HCT116 (cell line): ENCODE measurements at regions of chr6 and their contacts with region 1.

Region 1: GRCh38 chr6:132962936-132963868 is 148.8 kb downstream of the RPS12 start:
- DNase-seq: peak; percentile 62
- ATAC-seq: peak; percentile 100
- H3K4me3 ChIP-seq: no peak overlapping the region
- H3K27ac ChIP-seq: no peak overlapping the region
- H3K4me1 ChIP-seq: no peaks in the 10 kb centered on the region
- H3K27me3 ChIP-seq: no peaks in the 10 kb centered on the region
- CTCF ChIP-seq: peak; percentile 75 to 87 (median 86)
- POLR2A ChIP-seq: no peak
- RAD21 ChIP-seq: peak; percentile 89

Region 2: DNA sequence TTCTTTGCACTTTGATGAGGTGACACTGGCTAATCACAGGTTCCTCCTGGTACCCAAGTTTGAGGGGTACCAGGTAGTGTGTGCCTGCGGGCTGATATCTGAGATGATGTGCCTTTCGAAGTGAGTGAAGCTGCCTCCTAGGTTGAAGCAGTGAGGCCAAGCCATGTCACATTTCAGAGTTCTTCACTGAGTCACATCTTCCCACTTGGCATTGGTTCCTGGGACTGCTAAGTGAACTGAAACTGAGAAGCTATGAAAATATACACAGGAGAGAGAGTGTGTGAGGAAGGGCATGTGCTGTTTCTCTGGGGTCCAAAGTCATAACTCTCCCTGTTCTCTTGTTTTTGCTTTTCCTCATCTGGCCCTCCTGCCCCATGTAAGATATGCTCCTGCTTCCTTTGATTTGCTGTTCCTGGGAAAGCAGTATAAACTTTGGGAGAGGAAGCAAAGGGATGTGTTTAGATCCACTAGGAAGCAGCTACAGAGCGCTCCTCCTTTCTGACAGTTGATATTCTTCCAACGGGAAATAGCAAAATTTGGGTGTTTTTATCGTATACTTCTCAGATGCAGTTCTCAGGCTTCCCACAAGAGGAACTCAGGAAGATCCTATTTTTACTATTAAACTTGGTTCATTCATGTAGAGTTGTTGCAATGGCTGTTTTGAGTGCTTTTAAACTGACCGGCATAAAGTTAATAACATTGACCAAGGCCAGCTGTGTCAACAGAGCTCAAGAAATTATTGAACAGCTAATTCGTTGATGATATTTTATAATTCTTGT is 715.6 kb before region 1 on chr6:
- CTCF ChIA-PET with region 1: no interaction called
- POLR2A ChIA-PET with region 1: no interaction called
- RAD21 ChIA-PET with region 1: no interaction called
- intact Hi-C with region 1: no loop called
- DNase-seq: no peak
- ATAC-seq: no peak
- H3K4me3 ChIP-seq: no peak overlapping the region
- H3K27ac ChIP-seq: no peak overlapping the region
- H3K4me1 ChIP-seq: no peaks in the 10 kb centered on the region
- H3K27me3 ChIP-seq: no peaks in the 10 kb centered on the region
- CTCF ChIP-seq: no peak
- POLR2A ChIP-seq: no peak
- RAD21 ChIP-seq: no peak

Region 3: GRCh38 chr6:132788658-132789395 is 174.4 kb before region 1 on chr6:
- CTCF ChIA-PET with region 1: no interaction called
- POLR2A ChIA-PET with region 1: no interaction called
- RAD21 ChIA-PET with region 1: no interaction called
- intact Hi-C with region 1: no loop called
- DNase-seq: no peak
- ATAC-seq: no peak
- H3K4me3 ChIP-seq: no peak overlapping the region
- H3K27ac ChIP-seq: no peak overlapping the region
- H3K4me1 ChIP-seq: no peaks in the 10 kb centered on the region
- H3K27me3 ChIP-seq: no peaks in the 10 kb centered on the region
- CTCF ChIP-seq: no peak
- POLR2A ChIP-seq: no peak
- RAD21 ChIP-seq: no peak

Region 4: GRCh38 chr6:132820629-132821381 is 142.4 kb before region 1 on chr6:
- CTCF ChIA-PET with region 1: interaction called, 6 read pairs
- POLR2A ChIA-PET with region 1: no interaction called
- RAD21 ChIA-PET with region 1: interaction called in 1 of 2 experiments, 10 read pairs
- intact Hi-C with region 1: no loop called
- DNase-seq: no peak
- ATAC-seq: peak; percentile 44
- H3K4me3 ChIP-seq: no peak overlapping the region
- H3K27ac ChIP-seq: peak overlapping the region; percentile 44; the same call in 1 of the 2 replicates
- H3K4me1 ChIP-seq: peaks cover 0 to 54% of the 10 kb centered on the region in 2 experiments; a peak in 3 of 4 replicates
- H3K27me3 ChIP-seq: no peaks in the 10 kb centered on the region
- CTCF ChIP-seq: no peak
- POLR2A ChIP-seq: peak; percentile 17
- RAD21 ChIP-seq: no peak

Region 5: GRCh38 chr6:132937466-132937906 is 25.7 kb before region 1 on chr6:
- CTCF ChIA-PET with region 1: interaction called, 16 read pairs
- POLR2A ChIA-PET with region 1: no interaction called
- RAD21 ChIA-PET with region 1: interaction called in 1 of 2 experiments, 4 read pairs
- intact Hi-C with region 1: no loop called
- DNase-seq: peak; percentile 57
- ATAC-seq: peak; percentile 91
- H3K4me3 ChIP-seq: 0 out of 4 replicates have a peak overlapping the region, but pooled peaks of 1 of the 2 experiments have one; percentile 2
- H3K27ac ChIP-seq: no peak overlapping the region
- H3K4me1 ChIP-seq: peaks cover 0 to 5% of the 10 kb centered on the region in 2 experiments; a peak in 2 of 4 replicates
- H3K27me3 ChIP-seq: peaks cover 6% of the 10 kb centered on the region; the same call in 1 of the 2 replicates
- CTCF ChIP-seq: peak; percentile 39 to 74 (median 68); a peak in 5 of 6 replicates
- POLR2A ChIP-seq: no peak
- RAD21 ChIP-seq: peak; percentile 64

Region 6: GRCh38 chr6:133184798-133185372 is 221.7 kb after region 1 on chr6:
- CTCF ChIA-PET with region 1: interaction called, 4 read pairs
- POLR2A ChIA-PET with region 1: no interaction called
- RAD21 ChIA-PET with region 1: no interaction called
- intact Hi-C with region 1: loop called (anchors 5 kb)
- DNase-seq: no peak
- ATAC-seq: peak; percentile 57; the same call in 1 of the 2 replicates
- H3K4me3 ChIP-seq: no peak overlapping the region
- H3K27ac ChIP-seq: no peak overlapping the region
- H3K4me1 ChIP-seq: no peaks in the 10 kb centered on the region
- H3K27me3 ChIP-seq: peaks cover 21% of the 10 kb centered on the region
- CTCF ChIP-seq: peak; percentile 38 to 69 (median 50); a peak in 5 of 6 replicates
- POLR2A ChIP-seq: no peak
- RAD21 ChIP-seq: peak; percentile 58

Region 7: GRCh38 chr6:133553652-133554051 is 590.5 kb after region 1 on chr6:
- CTCF ChIA-PET with region 1: interaction called, 7 read pairs
- POLR2A ChIA-PET with region 1: no interaction called
- RAD21 ChIA-PET with region 1: no interaction called
- intact Hi-C with region 1: loop called (anchors 2 kb)
- DNase-seq: peak; percentile 56
- ATAC-seq: peak; percentile 86
- H3K4me3 ChIP-seq: no peak overlapping the region
- H3K27ac ChIP-seq: no peak overlapping the region
- H3K4me1 ChIP-seq: 0 out of 4 replicates have a peak, but pooled peaks cover 0 to 3% of the 10 kb centered on the region in 2 experiments
- H3K27me3 ChIP-seq: no peaks in the 10 kb centered on the region
- CTCF ChIP-seq: peak; percentile 54 to 64 (median 63)
- POLR2A ChIP-seq: no peak
- RAD21 ChIP-seq: peak; percentile 77